CD4-positive, alpha-beta T cell (primary cell): ENCODE measurements at regions of chr9 and their contacts with region 1.

Region 1: DNA sequence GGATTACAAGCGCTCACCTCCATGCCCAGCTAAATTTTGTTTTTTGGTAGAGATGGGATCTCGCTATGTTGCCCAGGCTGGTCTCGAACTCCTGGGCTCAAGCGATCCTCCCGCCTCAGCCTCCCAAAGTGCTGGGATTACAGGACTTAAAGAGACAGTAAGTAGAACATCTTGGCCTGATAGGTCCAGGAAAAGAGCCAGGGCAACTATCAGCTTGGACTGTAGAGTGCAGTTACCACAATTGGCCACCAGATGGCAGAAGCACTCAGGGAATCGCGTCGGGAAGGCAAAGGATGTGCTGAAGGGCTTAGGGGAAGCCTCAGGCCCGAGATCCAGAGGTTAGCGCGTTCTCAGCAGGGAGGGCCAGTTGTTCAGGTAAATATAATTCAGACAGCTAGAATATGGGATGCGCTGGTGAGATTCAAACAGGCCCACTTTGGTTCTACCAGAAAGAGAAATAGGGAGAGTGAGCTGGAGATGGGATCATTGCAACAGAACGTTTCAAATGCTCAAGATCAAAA is 21.5 kb downstream of the C9orf57 start:
- DNase-seq: peak; percentile 23 to 76 (median 51)
- ATAC-seq: peak; percentile 64
- H3K4me3 ChIP-seq: no peak overlapping the region
- H3K4me3 Mint-ChIP-seq: no peak overlapping the region
- H3K27ac ChIP-seq: no peak overlapping the region
- H3K27ac Mint-ChIP-seq: no peak overlapping the region
- H3K4me1 ChIP-seq: peaks cover 9% of the 10 kb centered on the region
- H3K4me1 Mint-ChIP-seq: peaks cover 7% of the 10 kb centered on the region
- H3K27me3 ChIP-seq: peaks cover 0 to 4% of the 10 kb centered on the region in 2 experiments
- H3K27me3 Mint-ChIP-seq: peaks cover 11% of the 10 kb centered on the region
- CTCF ChIP-seq: peak; percentile 97

Region 2: GRCh38 chr9:72271613-72272478 is 232.9 kb after region 1 on chr9:
- CTCF ChIA-PET with region 1: interaction called, 9 read pairs
- POLR2A ChIA-PET with region 1: no interaction called
- intact Hi-C with region 1: loop called (anchors 1 to 2 kb)
- DNase-seq: peak in 12 of 14 experiments; percentile 7 to 71 (median 27)
- ATAC-seq: no peak
- H3K4me3 ChIP-seq: no peak overlapping the region
- H3K4me3 Mint-ChIP-seq: no peak overlapping the region
- H3K27ac ChIP-seq: no peak overlapping the region
- H3K27ac Mint-ChIP-seq: no peak overlapping the region
- H3K4me1 ChIP-seq: no peaks in the 10 kb centered on the region
- H3K4me1 Mint-ChIP-seq: no peaks in the 10 kb centered on the region
- H3K27me3 ChIP-seq: no peaks in the 10 kb centered on the region
- H3K27me3 Mint-ChIP-seq: no peaks in the 10 kb centered on the region
- CTCF ChIP-seq: peak; percentile 88

Region 3: GRCh38 chr9:72540348-72540873 is 501.5 kb after region 1 on chr9:
- CTCF ChIA-PET with region 1: no interaction called
- POLR2A ChIA-PET with region 1: no interaction called
- intact Hi-C with region 1: no loop called
- DNase-seq: no peak
- ATAC-seq: no peak
- H3K4me3 ChIP-seq: no peak overlapping the region
- H3K4me3 Mint-ChIP-seq: no peak overlapping the region
- H3K27ac ChIP-seq: no peak overlapping the region
- H3K27ac Mint-ChIP-seq: no peak overlapping the region
- H3K4me1 ChIP-seq: no peaks in the 10 kb centered on the region
- H3K4me1 Mint-ChIP-seq: no peaks in the 10 kb centered on the region
- H3K27me3 ChIP-seq: no peaks in the 10 kb centered on the region
- H3K27me3 Mint-ChIP-seq: no peaks in the 10 kb centered on the region
- CTCF ChIP-seq: no peak

Region 4: DNA sequence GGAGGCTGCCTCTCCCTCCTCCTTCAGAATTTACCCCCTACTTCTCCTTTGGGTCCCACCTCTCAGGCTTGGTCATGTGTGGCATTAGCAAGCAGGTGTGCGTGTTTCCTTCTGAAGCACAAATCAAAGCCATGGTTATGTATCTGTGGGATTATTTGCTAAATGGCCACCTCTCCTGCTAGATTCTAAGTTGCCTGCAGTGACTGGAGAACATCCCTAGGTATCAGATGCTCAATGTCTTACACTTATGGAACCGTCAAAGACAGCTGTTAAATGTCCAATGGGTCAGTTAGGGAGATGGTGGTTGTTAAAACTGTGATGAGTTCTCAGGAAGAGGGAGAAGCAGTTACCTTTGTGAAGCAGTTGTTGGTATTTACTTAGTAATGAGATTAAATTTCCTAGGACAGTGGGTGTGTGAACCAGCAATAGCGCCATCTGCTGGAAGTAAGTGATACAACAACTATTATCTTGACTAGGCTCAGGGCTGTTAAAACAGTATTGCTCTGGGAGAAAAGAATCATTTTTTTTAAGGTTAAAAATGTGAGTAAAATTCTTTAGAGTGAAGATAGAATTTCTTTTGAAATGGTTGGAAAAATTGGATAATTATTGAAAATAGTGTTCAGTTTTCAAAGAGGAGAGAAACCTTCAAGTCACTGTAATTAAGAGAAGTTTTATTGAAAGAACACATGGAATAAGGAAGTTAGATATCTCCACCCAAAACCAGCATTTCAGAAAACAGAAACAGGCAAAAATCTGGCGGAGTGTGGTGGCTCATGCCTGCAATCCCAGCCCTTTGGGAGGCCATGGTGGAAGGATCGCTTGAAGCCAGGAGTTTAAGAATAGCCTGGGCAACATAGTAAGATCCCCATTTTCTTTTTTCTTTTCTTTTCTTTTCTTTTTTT is 553.8 kb after region 1 on chr9:
- CTCF ChIA-PET with region 1: no interaction called
- POLR2A ChIA-PET with region 1: no interaction called
- intact Hi-C with region 1: loop called in 1 of 2 experiments (anchors 10 kb)
- DNase-seq: peak in 8 of 14 experiments; percentile 2 to 80 (median 34)
- ATAC-seq: peak; percentile 80
- H3K4me3 ChIP-seq: no peak overlapping the region
- H3K4me3 Mint-ChIP-seq: no peak overlapping the region
- H3K27ac ChIP-seq: no peak overlapping the region
- H3K27ac Mint-ChIP-seq: no peak overlapping the region
- H3K4me1 ChIP-seq: no peaks in the 10 kb centered on the region
- H3K4me1 Mint-ChIP-seq: peaks cover 4% of the 10 kb centered on the region
- H3K27me3 ChIP-seq: no peaks in the 10 kb centered on the region
- H3K27me3 Mint-ChIP-seq: peaks cover 4% of the 10 kb centered on the region
- CTCF ChIP-seq: peak; percentile 95

Region 5: GRCh38 chr9:72827950-72828731 is 789.2 kb after region 1 on chr9:
- CTCF ChIA-PET with region 1: no interaction called
- POLR2A ChIA-PET with region 1: no interaction called
- intact Hi-C with region 1: loop called in 1 of 2 experiments (anchors 5 kb)
- DNase-seq: no peak
- ATAC-seq: no peak
- H3K4me3 ChIP-seq: no peak overlapping the region
- H3K4me3 Mint-ChIP-seq: no peak overlapping the region
- H3K27ac ChIP-seq: no peak overlapping the region
- H3K27ac Mint-ChIP-seq: no peak overlapping the region
- H3K4me1 ChIP-seq: no peaks in the 10 kb centered on the region
- H3K4me1 Mint-ChIP-seq: no peaks in the 10 kb centered on the region
- H3K27me3 ChIP-seq: no peaks in the 10 kb centered on the region
- H3K27me3 Mint-ChIP-seq: peaks cover 4% of the 10 kb centered on the region
- CTCF ChIP-seq: no peak

Region 6: DNA sequence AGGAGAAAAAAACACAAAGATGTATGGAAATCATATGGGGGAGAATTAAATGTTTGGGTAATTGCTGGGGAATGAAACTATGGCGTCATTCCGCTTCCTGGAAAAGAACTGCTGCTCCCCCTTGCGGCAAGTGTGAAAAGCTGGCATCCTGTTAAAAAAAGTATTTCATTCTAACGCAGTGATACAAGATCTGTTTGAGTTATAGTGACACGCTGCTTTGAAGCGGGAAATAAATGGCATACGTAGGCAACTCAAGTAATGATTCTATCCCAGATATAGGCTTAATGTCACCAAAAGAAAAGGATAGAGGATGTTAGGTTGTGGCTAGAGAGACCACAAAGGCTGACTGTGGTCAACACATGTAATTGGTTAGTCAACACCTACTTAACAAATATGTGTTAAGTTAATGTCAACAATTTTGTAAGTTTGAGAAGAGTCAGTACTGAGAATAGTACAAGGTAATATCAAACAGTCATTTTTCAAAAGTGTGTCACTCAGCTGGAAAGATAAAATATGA is 984.1 kb after region 1 on chr9:
- CTCF ChIA-PET with region 1: interaction called, 3 read pairs
- POLR2A ChIA-PET with region 1: no interaction called
- intact Hi-C with region 1: loop called (anchors 5 kb)
- DNase-seq: peak in 13 of 14 experiments; percentile 2 to 71 (median 19)
- ATAC-seq: peak; percentile 32
- H3K4me3 ChIP-seq: no peak overlapping the region
- H3K4me3 Mint-ChIP-seq: no peak overlapping the region
- H3K27ac ChIP-seq: no peak overlapping the region
- H3K27ac Mint-ChIP-seq: no peak overlapping the region
- H3K4me1 ChIP-seq: peaks cover 4% of the 10 kb centered on the region
- H3K4me1 Mint-ChIP-seq: peaks cover 7% of the 10 kb centered on the region
- H3K27me3 ChIP-seq: no peaks in the 10 kb centered on the region
- H3K27me3 Mint-ChIP-seq: peaks cover 20% of the 10 kb centered on the region
- CTCF ChIP-seq: peak; percentile 69

Region 7: DNA sequence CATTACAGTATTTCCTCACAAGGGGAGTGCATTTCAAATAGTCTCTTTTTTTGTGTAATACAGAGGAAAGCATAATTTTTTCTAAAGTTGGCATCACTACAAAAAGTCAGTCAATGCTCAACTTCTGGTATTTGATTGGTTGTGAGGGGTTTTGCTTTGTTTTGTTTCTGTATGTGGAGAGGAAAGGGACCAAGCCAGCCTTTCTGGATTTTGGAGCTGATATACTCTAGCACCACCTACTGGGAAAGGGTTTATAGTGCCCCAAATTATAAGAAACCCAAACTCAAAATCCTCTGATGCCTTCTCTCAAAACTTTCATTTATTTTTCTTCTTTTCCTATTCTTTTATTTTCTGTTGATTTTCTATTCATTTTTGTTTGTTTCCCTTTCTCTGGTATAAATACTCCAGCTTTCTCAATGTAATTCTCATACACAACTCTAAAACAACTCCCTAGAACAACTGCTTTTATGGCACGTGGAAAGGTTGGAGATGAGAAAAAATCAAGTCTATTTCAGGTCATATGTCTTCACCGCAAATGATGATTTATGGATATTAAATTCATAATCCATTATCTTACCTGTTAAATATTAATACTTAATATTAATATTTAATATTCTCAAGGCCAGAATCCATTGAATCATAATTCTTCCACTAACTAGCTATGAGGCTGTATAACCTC is 1043.2 kb after region 1 on chr9:
- CTCF ChIA-PET with region 1: interaction called, 4 read pairs
- POLR2A ChIA-PET with region 1: no interaction called
- intact Hi-C with region 1: loop called in 1 of 2 experiments (anchors 5 kb)
- DNase-seq: peak in 3 of 14 experiments; percentile 21 to 49 (median 38)
- ATAC-seq: peak; percentile 62
- H3K4me3 ChIP-seq: no peak overlapping the region
- H3K4me3 Mint-ChIP-seq: no peak overlapping the region
- H3K27ac ChIP-seq: no peak overlapping the region
- H3K27ac Mint-ChIP-seq: no peak overlapping the region
- H3K4me1 ChIP-seq: no peaks in the 10 kb centered on the region
- H3K4me1 Mint-ChIP-seq: no peaks in the 10 kb centered on the region
- H3K27me3 ChIP-seq: peaks cover 0 to 4% of the 10 kb centered on the region in 2 experiments
- H3K27me3 Mint-ChIP-seq: peaks cover 37% of the 10 kb centered on the region
- CTCF ChIP-seq: peak; percentile 72